ENCODE measurements at regions of chr12 and their contacts with region 1.

Region 1: GRCh38 chr12:110286623-110287022 is 5.6 kb downstream of the ATP2A2 start:
- DNase-seq: peak; percentile 21
- H3K4me3 Mint-ChIP-seq: peak overlapping the region; percentile 90
- H3K27ac Mint-ChIP-seq: peak overlapping the region; percentile 81
- H3K4me1 Mint-ChIP-seq: peaks cover 58% of the 10 kb centered on the region
- H3K27me3 Mint-ChIP-seq: no peaks in the 10 kb centered on the region

Region 2: GRCh38 chr12:110312581-110313360 is 26.1 kb after region 1 on chr12:
- CTCF ChIA-PET with region 1: interaction called, 4 read pairs
- POLR2A ChIA-PET with region 1: interaction called, 3 read pairs
- intact Hi-C with region 1: loop called (anchors 1 kb)
- DNase-seq: peak; percentile 39
- H3K4me3 Mint-ChIP-seq: no peak overlapping the region
- H3K27ac Mint-ChIP-seq: peak overlapping the region; percentile 85
- H3K4me1 Mint-ChIP-seq: peaks cover 61% of the 10 kb centered on the region
- H3K27me3 Mint-ChIP-seq: no peaks in the 10 kb centered on the region